Esophagus muscularis mucosa (tissue), 4 donors: ENCODE measurements at regions of chr1 and their contacts with region 1.

Region 1: GRCh38 chr1:157156058-157156541 is 17.9 kb upstream of the ETV3 start:
- DNase-seq: no peak
- H3K4me3 ChIP-seq: peak overlapping the region; percentile 18 to 40 (median 28)
- H3K27ac ChIP-seq: no peak overlapping the region
- H3K4me1 ChIP-seq: peaks cover 20 to 29% (median 24%) of the 10 kb centered on the region in 4 donors
- H3K27me3 ChIP-seq: peaks cover 0 to 20% (median 0%) of the 10 kb centered on the region in 4 donors
- CTCF ChIP-seq: peak; percentile 91 to 99 (median 98)
- EP300 ChIP-seq: no peak
- POLR2A ChIP-seq: no peak

Region 2: DNA sequence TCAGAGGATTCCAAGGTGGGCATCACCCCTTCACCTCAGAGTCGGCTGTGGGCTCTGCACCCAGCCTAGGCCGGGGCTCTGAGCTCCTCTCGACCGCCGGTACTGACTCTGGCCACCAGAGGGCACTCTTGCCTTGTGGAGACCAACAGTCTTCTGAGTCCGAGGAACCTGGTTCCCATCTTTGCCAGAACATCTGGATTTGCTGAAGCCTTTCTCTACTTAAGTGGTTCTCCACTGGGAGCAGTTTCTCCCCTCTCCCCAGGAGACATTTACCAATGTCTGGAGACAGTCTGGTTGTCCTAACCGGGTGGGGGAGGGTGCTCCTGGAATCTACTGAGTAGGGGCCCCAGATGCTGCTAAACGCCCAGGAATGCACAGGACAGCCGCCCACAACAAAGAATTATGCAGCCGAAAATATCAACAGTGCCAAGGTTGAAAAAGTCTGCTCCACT is 65.9 kb before region 1 on chr1:
- intact Hi-C with region 1: loop called (anchors 1 kb)
- DNase-seq: no peak
- H3K4me3 ChIP-seq: no peak overlapping the region
- H3K27ac ChIP-seq: no peak overlapping the region
- H3K4me1 ChIP-seq: peaks cover 8 to 16% (median 14%) of the 10 kb centered on the region in 4 donors
- H3K27me3 ChIP-seq: no peaks in the 10 kb centered on the region
- CTCF ChIP-seq: peak; percentile 88 to 96 (median 94)
- EP300 ChIP-seq: no peak
- POLR2A ChIP-seq: no peak

Region 3: GRCh38 chr1:157469752-157470675 is 313.9 kb after region 1 on chr1:
- intact Hi-C with region 1: no loop called
- DNase-seq: no peak
- H3K4me3 ChIP-seq: no peak overlapping the region
- H3K27ac ChIP-seq: no peak overlapping the region
- H3K4me1 ChIP-seq: no peaks in the 10 kb centered on the region
- H3K27me3 ChIP-seq: no peaks in the 10 kb centered on the region
- CTCF ChIP-seq: no peak
- EP300 ChIP-seq: no peak
- POLR2A ChIP-seq: no peak